Mammary epithelial cell (primary cell): ENCODE measurements at regions of chr19 and their contacts with region 1.

Region 1: DNA sequence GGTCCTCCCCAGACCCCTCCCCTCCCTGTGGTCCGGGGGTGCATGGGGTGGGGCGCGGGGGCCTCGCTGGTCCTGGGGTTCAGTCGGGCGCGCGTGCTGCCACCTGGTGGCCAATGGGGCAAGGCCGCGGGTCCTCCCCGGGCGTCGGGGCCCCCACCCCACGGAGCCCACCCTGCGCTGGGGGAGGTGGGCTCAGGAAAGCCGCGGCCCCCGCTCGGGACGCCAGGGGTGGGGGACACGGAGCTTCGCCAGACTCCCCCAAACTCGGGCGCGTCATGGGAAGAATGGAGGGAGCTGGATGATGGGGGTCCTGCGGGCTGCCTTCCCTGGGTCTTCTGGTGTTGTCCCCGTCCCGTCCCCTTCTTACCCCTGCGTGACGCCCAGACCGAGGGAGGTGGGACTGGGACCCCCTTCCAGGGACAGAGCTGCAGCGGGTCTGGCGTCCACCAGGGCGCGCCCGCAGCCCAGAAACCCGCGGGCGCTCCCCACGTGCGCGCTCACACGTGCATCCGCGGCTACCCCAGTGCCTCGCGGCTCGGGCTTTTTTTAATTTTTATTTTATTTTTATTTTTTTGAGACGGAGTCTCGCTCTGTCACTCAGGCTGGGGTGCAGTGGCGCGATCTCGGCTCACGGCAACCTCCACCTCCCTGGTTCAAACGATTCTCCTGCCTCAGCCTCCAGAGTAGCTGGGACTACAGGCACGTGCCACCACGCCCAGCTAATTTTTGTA is 19.8 kb upstream of the TCF3 start:
- DNase-seq: no peak
- H3K4me3 ChIP-seq: peak overlapping the region in 2 of 3 experiments; percentile 6 to 49
- H3K27ac ChIP-seq: no peak overlapping the region
- H3K4me1 ChIP-seq: peaks cover 11% of the 10 kb centered on the region
- H3K27me3 ChIP-seq: peaks cover 8% of the 10 kb centered on the region
- CTCF ChIP-seq: peak; percentile 62 to 74

Region 2: DNA sequence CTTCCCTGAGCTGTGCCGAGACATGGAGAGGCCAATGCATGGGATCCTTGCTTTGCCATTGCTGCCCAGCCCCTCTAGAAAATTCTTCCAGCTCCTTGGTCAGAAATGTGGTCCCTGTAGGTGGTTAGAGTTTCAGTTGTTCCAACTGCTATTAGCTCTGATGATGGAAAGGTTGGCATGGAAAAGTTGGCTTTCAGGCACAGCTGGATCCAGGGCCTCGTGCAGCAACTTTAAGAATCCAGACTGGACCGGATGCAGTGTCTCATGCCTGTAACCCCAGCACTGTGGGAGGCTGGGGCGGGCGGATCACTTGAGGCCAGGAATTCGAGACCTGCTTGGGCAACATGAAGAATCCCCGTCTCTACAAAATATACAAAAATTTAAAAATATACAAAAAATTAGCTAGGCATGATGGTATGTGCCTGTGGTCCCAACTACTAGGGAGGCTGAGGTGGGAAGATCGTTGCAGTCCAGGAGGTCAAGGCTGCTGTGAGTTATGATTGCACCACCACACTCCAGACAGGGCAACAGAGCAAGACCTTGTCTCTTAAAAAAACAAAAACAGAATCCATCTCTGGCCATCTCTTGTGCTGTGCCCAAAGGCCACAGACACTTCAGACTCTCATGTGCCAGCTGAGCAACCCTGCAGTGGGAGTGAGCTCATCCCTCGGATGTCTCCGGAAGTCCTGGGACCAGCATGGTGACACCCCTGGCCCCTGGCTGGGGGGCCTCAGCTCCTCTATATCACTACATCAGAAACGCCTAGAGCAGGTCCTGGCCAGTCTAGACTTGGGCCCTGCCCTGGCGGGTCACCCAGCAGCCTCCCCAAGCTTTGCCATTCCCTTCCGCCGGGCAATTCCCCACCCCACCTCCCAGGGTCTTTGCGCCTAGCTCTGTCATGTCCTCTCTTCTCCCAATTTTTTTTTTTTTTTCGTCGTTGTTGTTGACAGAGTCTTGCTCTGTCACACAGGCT is 120.8 kb before region 1 on chr19:
- CTCF ChIA-PET with region 1: interaction called, 13 read pairs
- dilution Hi-C with region 1: no loop called
- in situ Hi-C with region 1: no loop called
- intact Hi-C with region 1: loop called (anchors 1 kb)
- DNase-seq: no peak
- H3K4me3 ChIP-seq: no peak overlapping the region
- H3K27ac ChIP-seq: no peak overlapping the region
- H3K4me1 ChIP-seq: no peaks in the 10 kb centered on the region
- H3K27me3 ChIP-seq: no peaks in the 10 kb centered on the region
- CTCF ChIP-seq: no peak

Region 3: DNA sequence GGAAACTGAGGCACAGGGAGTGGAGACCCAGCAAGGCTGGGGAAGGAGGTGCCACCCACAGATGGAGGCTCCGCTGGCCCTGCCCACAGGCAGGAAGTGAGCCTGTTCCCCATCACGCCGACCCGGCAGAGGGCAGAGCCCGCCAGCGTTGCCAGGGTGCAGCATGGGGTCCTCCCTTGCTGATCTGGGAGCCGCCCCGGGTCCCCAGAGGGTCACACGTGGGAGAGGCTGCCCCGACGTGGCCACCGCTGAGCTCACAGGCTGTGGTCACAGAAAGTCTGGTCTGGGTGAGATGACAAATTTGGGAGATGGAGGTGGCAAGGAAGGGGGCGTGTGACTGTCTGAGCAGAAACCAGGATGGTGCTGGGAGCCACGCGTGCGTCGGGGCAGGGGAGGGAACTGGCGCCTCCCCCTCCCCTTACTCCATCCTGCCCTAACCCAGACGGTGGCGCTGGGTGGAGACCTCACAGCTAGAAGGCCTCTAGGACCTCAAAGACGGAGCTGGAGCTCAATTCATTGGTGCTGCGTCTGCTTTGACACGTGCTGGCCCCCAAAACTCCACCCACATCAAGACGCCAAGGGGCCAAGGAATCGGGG is 111.8 kb before region 1 on chr19:
- CTCF ChIA-PET with region 1: no interaction called
- dilution Hi-C with region 1: loop called (anchors 5 kb)
- in situ Hi-C with region 1: no loop called
- intact Hi-C with region 1: no loop called
- DNase-seq: no peak
- H3K4me3 ChIP-seq: no peak overlapping the region
- H3K27ac ChIP-seq: no peak overlapping the region
- H3K4me1 ChIP-seq: no peaks in the 10 kb centered on the region
- H3K27me3 ChIP-seq: no peaks in the 10 kb centered on the region
- CTCF ChIP-seq: no peak

Region 4: GRCh38 chr19:1767464-1767933 is 95.3 kb after region 1 on chr19:
- CTCF ChIA-PET with region 1: no interaction called
- dilution Hi-C with region 1: no loop called
- in situ Hi-C with region 1: loop called in 1 of 2 experiments (anchors 10 kb)
- intact Hi-C with region 1: loop called (anchors 1 kb)
- DNase-seq: no peak
- H3K4me3 ChIP-seq: no peak overlapping the region
- H3K27ac ChIP-seq: no peak overlapping the region
- H3K4me1 ChIP-seq: peaks cover 10% of the 10 kb centered on the region
- H3K27me3 ChIP-seq: peaks cover 24% of the 10 kb centered on the region
- CTCF ChIP-seq: peak; percentile 79 to 91

Region 5: DNA sequence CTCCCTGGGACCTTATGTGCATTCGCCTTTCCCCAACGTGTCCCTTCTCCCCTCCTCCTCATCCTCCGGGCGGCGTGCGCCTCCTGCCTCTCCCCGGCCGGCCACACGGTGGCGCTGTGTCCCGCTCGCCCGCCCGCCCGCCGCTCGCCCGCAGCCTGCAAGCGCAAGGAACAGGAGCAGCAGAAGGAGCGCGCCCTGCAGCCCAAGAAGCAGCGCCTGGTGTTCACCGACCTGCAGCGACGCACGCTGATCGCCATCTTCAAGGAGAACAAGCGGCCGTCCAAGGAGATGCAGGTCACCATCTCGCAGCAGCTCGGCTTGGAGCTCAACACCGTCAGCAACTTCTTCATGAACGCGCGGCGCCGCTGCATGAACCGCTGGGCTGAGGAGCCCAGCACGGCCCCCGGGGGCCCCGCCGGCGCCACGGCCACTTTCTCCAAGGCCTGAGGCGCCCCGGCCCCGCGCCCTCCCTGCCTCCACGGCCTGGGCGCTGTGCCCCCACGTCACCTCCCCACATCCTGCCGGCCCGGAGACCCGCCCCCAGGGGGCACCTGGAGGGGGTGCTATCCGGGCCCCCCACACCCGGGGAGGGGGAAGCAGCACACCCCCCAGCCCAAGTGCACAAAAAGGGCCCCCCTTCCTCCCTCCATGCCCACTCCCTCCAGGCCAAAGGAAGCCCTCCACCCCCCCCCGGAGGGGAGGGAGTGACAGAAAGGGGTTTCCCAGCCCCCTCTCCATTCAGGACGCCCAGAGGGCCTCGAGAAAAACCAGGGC is 103.0 kb after region 1 on chr19:
- CTCF ChIA-PET with region 1: no interaction called
- dilution Hi-C with region 1: no loop called
- in situ Hi-C with region 1: loop called in 1 of 2 experiments (anchors 10 kb)
- intact Hi-C with region 1: no loop called
- DNase-seq: no peak
- H3K4me3 ChIP-seq: no peak overlapping the region
- H3K27ac ChIP-seq: no peak overlapping the region
- H3K4me1 ChIP-seq: peaks cover 27% of the 10 kb centered on the region
- H3K27me3 ChIP-seq: no peaks in the 10 kb centered on the region
- CTCF ChIP-seq: peak; percentile 48 to 52

Region 6: GRCh38 chr19:1794424-1795172 is 122.4 kb after region 1 on chr19:
- CTCF ChIA-PET with region 1: no interaction called
- dilution Hi-C with region 1: no loop called
- in situ Hi-C with region 1: no loop called
- intact Hi-C with region 1: loop called (anchors 1 kb)
- DNase-seq: no peak
- H3K4me3 ChIP-seq: no peak overlapping the region
- H3K27ac ChIP-seq: no peak overlapping the region
- H3K4me1 ChIP-seq: peaks cover 5% of the 10 kb centered on the region
- H3K27me3 ChIP-seq: no peaks in the 10 kb centered on the region
- CTCF ChIP-seq: no peak

Region 7: DNA sequence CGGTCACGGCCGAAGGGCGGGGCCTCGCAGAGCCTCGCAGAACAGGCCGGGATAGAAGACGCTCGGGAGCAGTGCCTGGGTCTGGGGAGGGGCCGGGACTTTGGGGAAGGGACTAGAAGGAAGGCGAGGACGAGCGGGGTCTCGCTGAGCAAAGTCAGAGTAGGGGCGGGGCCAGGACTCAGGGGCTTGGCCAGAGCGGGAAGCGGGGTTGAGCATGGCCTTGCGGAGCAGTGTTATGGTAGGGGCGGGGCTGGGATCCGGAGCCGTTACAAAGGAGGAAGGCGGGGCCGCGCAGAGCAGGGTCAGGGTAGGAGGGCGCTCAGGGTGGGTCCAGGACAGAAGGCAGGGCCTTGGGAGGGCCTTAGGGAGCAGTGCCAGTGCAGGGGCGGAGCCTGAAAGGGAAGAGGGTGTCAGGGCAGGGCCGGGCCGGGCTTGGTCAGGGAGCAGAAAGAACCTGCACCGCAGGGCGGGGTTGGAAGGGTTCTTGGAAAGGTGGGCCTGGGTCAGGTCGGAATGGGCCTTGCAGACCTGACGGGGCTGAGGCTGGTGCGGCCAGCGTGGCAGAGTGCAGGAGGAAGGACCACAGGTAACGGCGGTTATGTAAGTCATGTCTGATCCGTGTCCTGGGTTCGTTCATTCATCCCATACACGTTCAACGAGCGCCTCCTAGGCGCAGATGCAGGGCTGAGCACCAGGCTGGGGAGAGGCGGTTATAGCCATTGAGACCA is 140.4 kb after region 1 on chr19:
- CTCF ChIA-PET with region 1: no interaction called
- dilution Hi-C with region 1: no loop called
- in situ Hi-C with region 1: no loop called
- intact Hi-C with region 1: loop called (anchors 1 kb)
- DNase-seq: peak; percentile 95
- H3K4me3 ChIP-seq: peak overlapping the region; percentile 57 to 67 (median 58)
- H3K27ac ChIP-seq: peak overlapping the region; percentile 53
- H3K4me1 ChIP-seq: peaks cover 16% of the 10 kb centered on the region
- H3K27me3 ChIP-seq: no peaks in the 10 kb centered on the region
- CTCF ChIP-seq: peak; percentile 63 to 73